Sciatic nerve (tissue), 2 donors: ENCODE measurements at regions of chr11 and their contacts with region 1.

Region 1: DNA sequence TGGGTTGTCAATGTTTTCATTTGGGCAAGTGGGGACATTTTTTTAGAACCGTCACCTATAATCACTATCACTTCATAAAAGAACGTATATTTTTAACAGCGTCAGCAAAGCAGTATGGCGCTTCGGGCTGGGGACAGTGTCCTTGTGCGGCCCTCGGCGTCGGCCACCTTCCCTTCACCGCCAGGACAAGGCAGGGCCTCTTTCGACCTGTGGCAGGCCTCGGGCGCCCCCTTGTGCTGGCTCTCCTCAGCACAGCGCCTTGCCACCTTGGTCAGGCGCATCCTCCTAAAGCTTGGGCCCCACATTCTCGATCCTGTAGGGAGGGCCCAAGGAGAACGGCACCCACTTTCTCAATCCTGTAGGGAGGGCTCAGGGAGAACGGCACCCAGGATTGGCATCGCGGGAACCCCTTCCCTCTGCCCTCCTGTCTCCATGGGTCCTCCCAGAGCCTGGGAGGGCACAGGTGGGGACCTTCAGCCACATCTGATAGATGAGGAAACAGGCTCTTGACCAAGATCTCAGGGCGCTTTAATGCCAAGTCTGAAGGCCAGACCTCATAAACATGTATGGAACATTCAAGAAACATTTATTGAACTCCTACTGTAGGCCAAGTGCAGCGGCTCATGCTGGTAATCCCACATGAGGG is 11.5 kb upstream of the FADD start:
- DNase-seq: peak; percentile 80
- ATAC-seq: peak; percentile 89

Region 2: DNA sequence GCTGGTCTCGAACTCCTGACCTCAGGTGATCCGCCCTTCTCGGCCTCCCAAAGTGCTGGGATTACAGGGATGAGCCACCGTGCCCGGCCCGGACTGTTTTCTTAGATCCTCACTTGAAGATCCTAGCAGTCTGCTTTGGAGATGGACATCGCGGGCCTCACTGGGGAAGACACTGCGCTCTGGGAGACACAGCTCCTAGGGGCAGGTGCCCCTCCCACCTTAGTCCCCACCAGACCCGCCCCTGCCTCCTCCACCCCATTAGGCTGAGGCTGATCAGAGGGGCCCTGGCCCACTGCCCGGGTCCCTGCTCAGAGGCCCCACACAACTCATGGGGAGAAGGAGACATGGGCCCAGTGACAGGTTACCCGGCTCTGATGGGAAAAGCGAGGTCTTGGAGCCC is 505.2 kb before region 1 on chr11:
- intact Hi-C with region 1: loop called (anchors 5 kb)
- DNase-seq: no peak
- ATAC-seq: no peak

Region 3: GRCh38 chr11:69912911-69913451 is 278.6 kb before region 1 on chr11:
- intact Hi-C with region 1: loop called (anchors 1 kb)
- DNase-seq: peak; percentile 53
- ATAC-seq: no peak

Region 4: GRCh38 chr11:71114124-71114851 is 922.7 kb after region 1 on chr11:
- intact Hi-C with region 1: no loop called
- DNase-seq: no peak
- ATAC-seq: peak; percentile 57